Endothelial cell of umbilical vein (primary cell): ENCODE measurements at regions of chr13 and their contacts with region 1.

Region 1: GRCh38 chr13:30905932-30906383 is at the start of gene MEDAG:
- DNase-seq: peak; percentile 85
- H3K4me3 ChIP-seq: peak within 1 kb of the TSS; percentile 7 to 43 (median 38)
- H3K27ac ChIP-seq: peak within 1 kb of the TSS; percentile 79
- H3K4me1 ChIP-seq: peaks cover 32% of the 10 kb centered on the region
- H3K27me3 ChIP-seq: no peaks in the 10 kb centered on the region
- CTCF ChIP-seq: no peak
- POLR2A ChIP-seq: peak; percentile 67
- total RNA-seq, gene MEDAG: 27.2 and 30.2 TPM in 2 replicates

Region 2: GRCh38 chr13:30673669-30674521 is 232.1 kb before region 1 on chr13:
- CTCF ChIA-PET with region 1: interaction called, 3 read pairs
- POLR2A ChIA-PET with region 1: no interaction called
- dilution Hi-C with region 1: no loop called
- intact Hi-C with region 1: loop called (anchors 1 kb)
- DNase-seq: peak; percentile 88
- H3K4me3 ChIP-seq: peak overlapping the region; percentile 39 to 48 (median 43)
- H3K27ac ChIP-seq: peak overlapping the region; percentile 66
- H3K4me1 ChIP-seq: peaks cover 8% of the 10 kb centered on the region
- H3K27me3 ChIP-seq: no peaks in the 10 kb centered on the region
- CTCF ChIP-seq: peak; percentile 82 to 83
- POLR2A ChIP-seq: no peak

Region 3: DNA sequence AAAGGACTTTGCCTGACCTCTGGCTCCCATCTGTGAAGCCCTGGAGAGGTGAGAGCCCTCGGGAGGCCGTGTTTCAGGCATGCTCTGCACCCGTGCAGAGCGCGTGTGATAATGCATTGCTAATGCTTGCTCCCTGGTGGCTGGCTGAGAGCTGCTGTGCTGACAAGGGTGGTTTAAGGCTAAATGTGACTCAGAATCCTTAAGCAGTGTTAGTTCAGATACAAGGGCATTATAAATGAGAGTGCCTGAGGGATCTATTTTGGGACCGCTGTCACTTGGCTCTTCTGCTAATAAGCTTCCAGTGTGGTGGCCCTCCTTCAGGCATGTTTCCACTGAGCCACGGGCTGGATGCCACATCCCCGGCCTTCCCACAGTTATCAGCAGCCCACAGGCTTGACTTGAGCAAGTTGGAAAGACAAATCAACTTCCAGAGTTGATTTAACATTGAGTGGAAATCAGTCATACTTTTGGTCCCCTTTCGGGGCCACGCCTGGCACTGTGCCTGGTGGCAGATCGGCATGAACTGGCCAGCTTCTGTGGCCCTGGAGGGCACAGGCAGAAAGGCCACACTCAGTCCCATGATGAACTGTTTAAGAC is 153.7 kb before region 1 on chr13:
- CTCF ChIA-PET with region 1: no interaction called
- POLR2A ChIA-PET with region 1: no interaction called
- dilution Hi-C with region 1: no loop called
- intact Hi-C with region 1: no loop called
- DNase-seq: no peak
- H3K4me3 ChIP-seq: no peak overlapping the region
- H3K27ac ChIP-seq: no peak overlapping the region
- H3K4me1 ChIP-seq: no peaks in the 10 kb centered on the region
- H3K27me3 ChIP-seq: peaks cover 0 to 2% of the 10 kb centered on the region in 2 experiments
- CTCF ChIP-seq: no peak
- POLR2A ChIP-seq: no peak

Region 4: GRCh38 chr13:30872685-30873461 is 33.1 kb before region 1 on chr13:
- CTCF ChIA-PET with region 1: interaction called, 12 read pairs
- POLR2A ChIA-PET with region 1: interaction called, 15 read pairs
- dilution Hi-C with region 1: no loop called
- intact Hi-C with region 1: loop called (anchors 1 kb)
- DNase-seq: peak; percentile 97
- H3K4me3 ChIP-seq: no peak overlapping the region
- H3K27ac ChIP-seq: peak overlapping the region; percentile 79
- H3K4me1 ChIP-seq: peaks cover 50% of the 10 kb centered on the region
- H3K27me3 ChIP-seq: no peaks in the 10 kb centered on the region
- CTCF ChIP-seq: no peak
- POLR2A ChIP-seq: no peak